ENCODE measurements at regions of chr5 and their contacts with region 1.

Region 1: GRCh38 chr5:143086908-143087637 is 316.4 kb downstream of the NR3C1 start:
- DNase-seq: no peak
- ATAC-seq: peak in 3 of 4 donors; percentile 33 to 47 (median 38)
- H3K4me3 ChIP-seq: no peak overlapping the region
- H3K27ac ChIP-seq: no peak overlapping the region
- H3K4me1 ChIP-seq: peaks cover 21% of the 10 kb centered on the region
- H3K27me3 ChIP-seq: no peaks in the 10 kb centered on the region
- CTCF ChIP-seq: no peak

Region 2: DNA sequence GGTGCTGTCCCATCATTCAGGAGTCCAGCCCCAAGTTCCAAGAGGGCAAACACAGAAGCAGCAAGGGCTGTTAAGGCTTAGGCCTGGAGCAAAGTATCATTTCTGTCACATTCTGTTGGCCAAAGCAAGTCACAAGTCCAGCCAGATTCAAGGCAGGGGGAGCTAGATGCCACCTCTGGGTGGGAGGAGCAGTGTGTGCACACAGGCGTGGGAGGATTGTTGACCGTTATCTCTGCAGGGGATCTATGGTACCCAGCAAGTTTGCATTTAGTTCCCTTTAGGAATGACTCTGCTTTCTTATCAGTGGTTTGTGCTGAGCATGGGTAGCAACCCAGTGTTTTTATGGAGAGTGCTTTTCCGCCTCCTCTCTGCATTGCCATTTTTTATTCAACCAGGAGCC is 37.5 kb after region 1 on chr5:
- intact Hi-C with region 1: loop called in 1 of 2 experiments (anchors 5 kb)
- DNase-seq: no peak
- ATAC-seq: no peak
- H3K4me3 ChIP-seq: no peak overlapping the region
- H3K27ac ChIP-seq: no peak overlapping the region
- H3K4me1 ChIP-seq: peaks cover 52% of the 10 kb centered on the region
- H3K27me3 ChIP-seq: no peaks in the 10 kb centered on the region
- CTCF ChIP-seq: no peak